ENCODE measurements at regions of chr7 and their contacts with region 1.

Region 1: GRCh38 chr7:140881507-140882228 is 43.1 kb downstream of the BRAF start:
- DNase-seq: no peak
- ATAC-seq: no peak
- H3K4me3 ChIP-seq: no peak overlapping the region
- H3K27ac ChIP-seq: no peak overlapping the region
- H3K4me1 ChIP-seq: peaks cover 0 to 31% (median 23%) of the 10 kb centered on the region in 9 donors
- H3K27me3 ChIP-seq: no peaks in the 10 kb centered on the region
- CTCF ChIP-seq: no peak

Region 2: DNA sequence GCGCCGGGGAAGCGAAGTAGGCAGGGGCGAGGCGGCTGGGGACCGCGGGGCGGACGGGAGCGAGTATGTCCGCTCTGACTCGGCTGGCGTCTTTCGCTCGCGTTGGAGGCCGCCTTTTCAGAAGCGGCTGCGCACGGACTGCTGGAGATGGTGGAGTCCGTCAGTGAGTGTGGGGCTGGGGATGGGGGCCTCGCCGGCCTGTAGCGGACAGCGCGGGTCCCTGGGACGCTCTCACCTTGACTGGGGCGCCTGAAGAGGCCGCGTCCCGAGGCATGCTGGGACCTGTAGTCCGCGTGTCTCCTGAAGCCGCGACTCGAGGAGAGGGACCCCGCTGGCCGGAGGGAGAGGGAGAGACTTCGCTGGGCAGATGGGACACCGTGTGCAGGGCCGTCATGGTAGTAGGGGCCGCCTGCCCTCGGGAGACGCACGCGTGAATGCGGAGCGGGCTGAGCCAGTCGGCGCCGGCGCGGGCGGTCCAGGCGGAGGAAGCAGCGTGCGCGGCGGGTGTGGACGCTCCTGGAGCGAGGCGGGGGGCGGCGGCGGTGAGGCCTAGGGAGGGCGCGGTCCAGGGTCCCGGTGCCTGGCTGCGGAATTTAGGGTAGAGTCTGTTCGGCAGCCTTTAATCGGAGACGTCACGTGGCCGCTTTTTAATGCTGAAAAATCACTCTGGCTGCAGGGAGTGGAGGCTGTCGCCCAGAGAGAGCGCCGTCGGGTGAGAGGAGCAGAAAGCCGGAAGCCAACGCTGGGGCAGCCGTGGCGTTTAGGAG is 184.8 kb before region 1 on chr7 and contains the start of gene NDUFB2:
- intact Hi-C with region 1: no loop called
- DNase-seq: peak; percentile 50 to 53
- ATAC-seq: peak; percentile 91 to 97 (median 94)
- H3K4me3 ChIP-seq: peak within 1 kb of the TSS; percentile 48 to 96 (median 79)
- H3K27ac ChIP-seq: peak within 1 kb of the TSS; percentile 81 to 99 (median 95)
- H3K4me1 ChIP-seq: peaks cover 5 to 31% (median 27%) of the 10 kb centered on the region in 9 donors
- H3K27me3 ChIP-seq: no peaks in the 10 kb centered on the region
- CTCF ChIP-seq: no peak
- total RNA-seq, gene NDUFB2: 526 to 798 (median 653) TPM

Region 3: GRCh38 chr7:140831724-140832123 is 49.9 kb before region 1 on chr7:
- intact Hi-C with region 1: loop called in 1 of 10 experiments (anchors 10 kb)
- DNase-seq: no peak
- ATAC-seq: no peak
- H3K4me3 ChIP-seq: no peak overlapping the region
- H3K27ac ChIP-seq: no peak overlapping the region
- H3K4me1 ChIP-seq: no peaks in the 10 kb centered on the region
- H3K27me3 ChIP-seq: no peaks in the 10 kb centered on the region
- CTCF ChIP-seq: no peak

Region 4: GRCh38 chr7:140914083-140914482 is 32.4 kb after region 1 on chr7:
- intact Hi-C with region 1: no loop called
- DNase-seq: no peak
- ATAC-seq: no peak
- H3K4me3 ChIP-seq: no peak overlapping the region
- H3K27ac ChIP-seq: no peak overlapping the region
- H3K4me1 ChIP-seq: peaks cover 0 to 45% (median 14%) of the 10 kb centered on the region in 9 donors
- H3K27me3 ChIP-seq: no peaks in the 10 kb centered on the region
- CTCF ChIP-seq: no peak

Measured in heart right ventricle (tissue), 16 donors.